Caco-2 (cell line): ENCODE measurements at regions of chr7 and their contacts with region 1.

Region 1: DNA sequence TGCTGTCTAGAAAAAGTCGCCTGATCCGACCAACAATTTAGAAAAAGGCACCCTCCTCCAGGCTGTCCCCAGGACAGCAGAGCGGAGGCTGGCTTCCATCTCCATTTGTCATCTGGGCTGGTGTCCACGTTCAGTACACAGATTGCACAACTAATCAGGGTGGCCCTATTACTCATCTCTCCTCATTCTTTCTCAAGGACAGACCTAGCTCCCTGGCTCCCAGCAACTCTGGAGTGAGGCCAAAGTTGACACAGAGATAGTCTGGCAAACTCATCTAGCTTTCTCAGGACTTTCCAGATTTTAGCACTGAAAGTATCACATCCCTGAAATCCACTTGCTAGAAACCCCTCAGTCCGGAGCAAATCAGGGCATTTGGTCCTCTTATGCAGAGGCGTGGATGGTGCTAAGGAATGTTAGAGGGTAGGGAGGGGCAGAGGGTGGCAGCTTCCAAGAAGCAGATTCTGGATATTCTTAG is 75.1 kb downstream of the DNAH11 start:
- DNase-seq: peak; percentile 75 to 83
- H3K4me3 ChIP-seq: no peak overlapping the region
- H3K4me3 Mint-ChIP-seq: peak overlapping the region; percentile 59
- H3K27ac Mint-ChIP-seq: peak overlapping the region; percentile 94
- H3K4me1 ChIP-seq: peaks cover 40% of the 10 kb centered on the region
- H3K4me1 Mint-ChIP-seq: peaks cover 29% of the 10 kb centered on the region
- H3K27me3 ChIP-seq: no peaks in the 10 kb centered on the region
- H3K27me3 Mint-ChIP-seq: no peaks in the 10 kb centered on the region
- CTCF ChIP-seq: no peak

Region 2: GRCh38 chr7:21221129-21221528 is 396.8 kb before region 1 on chr7:
- CTCF ChIA-PET with region 1: no interaction called
- POLR2A ChIA-PET with region 1: no interaction called
- intact Hi-C with region 1: no loop called
- DNase-seq: no peak
- H3K4me3 ChIP-seq: no peak overlapping the region
- H3K4me3 Mint-ChIP-seq: no peak overlapping the region
- H3K27ac Mint-ChIP-seq: no peak overlapping the region
- H3K4me1 ChIP-seq: peaks cover 3% of the 10 kb centered on the region
- H3K4me1 Mint-ChIP-seq: peaks cover 2% of the 10 kb centered on the region
- H3K27me3 ChIP-seq: no peaks in the 10 kb centered on the region
- H3K27me3 Mint-ChIP-seq: peaks cover 3% of the 10 kb centered on the region
- CTCF ChIP-seq: no peak

Region 3: DNA sequence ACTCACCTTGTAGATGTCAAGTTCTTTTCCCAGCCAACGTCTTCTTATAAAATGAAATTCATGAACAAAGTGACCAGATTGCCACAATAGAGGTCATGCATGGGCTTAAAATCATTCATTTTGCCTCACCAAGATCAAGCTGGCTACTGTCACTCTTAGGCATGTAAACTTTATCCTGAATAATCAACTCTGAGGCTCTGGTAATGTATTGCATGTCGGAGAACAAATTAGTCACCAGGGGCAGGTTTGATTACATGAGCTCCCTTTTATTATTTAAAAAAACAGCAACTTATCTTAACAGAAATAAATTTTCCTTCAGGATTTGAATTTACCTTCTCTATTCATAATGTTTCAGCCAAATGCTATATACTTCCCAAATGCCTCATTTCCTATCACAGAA is 303.0 kb before region 1 on chr7:
- CTCF ChIA-PET with region 1: no interaction called
- POLR2A ChIA-PET with region 1: no interaction called
- intact Hi-C with region 1: no loop called
- DNase-seq: no peak
- H3K4me3 ChIP-seq: no peak overlapping the region
- H3K4me3 Mint-ChIP-seq: no peak overlapping the region
- H3K27ac Mint-ChIP-seq: no peak overlapping the region
- H3K4me1 ChIP-seq: no peaks in the 10 kb centered on the region
- H3K4me1 Mint-ChIP-seq: no peaks in the 10 kb centered on the region
- H3K27me3 ChIP-seq: no peaks in the 10 kb centered on the region
- H3K27me3 Mint-ChIP-seq: no peaks in the 10 kb centered on the region
- CTCF ChIP-seq: no peak

Region 4: GRCh38 chr7:21365866-21366624 is 251.9 kb before region 1 on chr7:
- CTCF ChIA-PET with region 1: no interaction called
- POLR2A ChIA-PET with region 1: no interaction called
- intact Hi-C with region 1: loop called (anchors 1 kb)
- DNase-seq: peak; percentile 52 to 77
- H3K4me3 ChIP-seq: no peak overlapping the region
- H3K4me3 Mint-ChIP-seq: peak overlapping the region; percentile 14
- H3K27ac Mint-ChIP-seq: peak overlapping the region; percentile 65
- H3K4me1 ChIP-seq: peaks cover 48% of the 10 kb centered on the region
- H3K4me1 Mint-ChIP-seq: peaks cover 34% of the 10 kb centered on the region
- H3K27me3 ChIP-seq: no peaks in the 10 kb centered on the region
- H3K27me3 Mint-ChIP-seq: no peaks in the 10 kb centered on the region
- CTCF ChIP-seq: no peak

Region 5: DNA sequence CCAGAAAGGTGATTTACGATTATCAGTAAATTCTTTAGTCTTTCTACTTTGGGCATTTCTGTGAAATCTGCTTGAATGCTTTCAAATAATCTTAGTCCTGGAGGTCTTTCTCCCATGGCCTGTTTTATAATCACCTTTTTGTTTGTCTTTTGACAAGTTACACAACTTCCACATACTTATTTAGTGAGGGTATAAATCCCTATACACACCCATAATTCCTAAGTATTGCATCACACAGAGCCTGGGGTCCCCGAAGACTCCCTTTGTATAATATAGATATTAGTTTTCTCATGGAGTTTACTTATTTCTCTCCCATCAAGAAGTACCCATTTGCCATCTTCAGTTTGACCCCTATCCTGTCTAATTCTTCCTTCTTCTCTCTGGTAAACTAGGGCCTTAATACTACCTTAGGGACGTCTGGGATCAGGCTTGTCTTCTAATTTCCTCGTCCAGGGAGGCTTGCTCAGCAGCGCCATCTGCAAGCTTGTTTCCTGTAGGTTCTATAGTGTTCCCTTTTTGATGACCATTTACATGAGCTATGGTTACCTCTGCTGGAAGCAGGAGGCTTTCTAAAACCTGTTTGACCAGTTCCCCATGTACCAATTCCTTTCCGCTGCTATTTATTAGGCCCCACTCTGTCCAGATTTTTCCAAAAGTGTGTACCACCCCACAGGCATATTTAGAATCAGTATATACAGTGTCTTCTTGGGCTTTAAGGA is 67.0 kb before region 1 on chr7:
- CTCF ChIA-PET with region 1: no interaction called
- POLR2A ChIA-PET with region 1: no interaction called
- intact Hi-C with region 1: loop called (anchors 2 kb)
- DNase-seq: peak; percentile 69 to 73
- H3K4me3 ChIP-seq: no peak overlapping the region
- H3K4me3 Mint-ChIP-seq: peak overlapping the region; percentile 16
- H3K27ac Mint-ChIP-seq: peak overlapping the region; percentile 61
- H3K4me1 ChIP-seq: peaks cover 22% of the 10 kb centered on the region
- H3K4me1 Mint-ChIP-seq: peaks cover 13% of the 10 kb centered on the region
- H3K27me3 ChIP-seq: no peaks in the 10 kb centered on the region
- H3K27me3 Mint-ChIP-seq: no peaks in the 10 kb centered on the region
- CTCF ChIP-seq: peak; percentile 18 to 23

Region 6: DNA sequence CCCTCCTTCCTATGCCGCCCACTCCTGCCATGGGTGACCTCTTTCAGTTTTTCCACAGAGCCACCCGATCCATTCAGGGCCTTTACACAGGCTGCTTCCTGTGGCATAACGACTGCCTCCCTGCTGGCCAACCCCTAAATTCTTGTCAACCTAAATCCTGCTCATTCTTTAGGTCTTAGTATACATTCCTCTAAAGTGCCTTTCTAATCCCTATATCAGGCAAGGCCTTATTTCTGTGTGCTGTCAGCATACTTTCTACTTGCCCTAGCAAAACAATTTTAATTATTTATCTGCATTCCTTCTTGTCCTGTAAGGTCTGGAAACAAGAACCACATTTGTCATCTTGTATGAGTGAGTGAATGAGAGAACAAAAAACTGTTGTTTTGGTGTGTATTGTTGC is 57.3 kb after region 1 on chr7:
- CTCF ChIA-PET with region 1: no interaction called
- POLR2A ChIA-PET with region 1: no interaction called
- intact Hi-C with region 1: loop called (anchors 1 kb)
- DNase-seq: peak; percentile 39 to 55
- H3K4me3 ChIP-seq: no peak overlapping the region
- H3K4me3 Mint-ChIP-seq: no peak overlapping the region
- H3K27ac Mint-ChIP-seq: no peak overlapping the region
- H3K4me1 ChIP-seq: peaks cover 19% of the 10 kb centered on the region
- H3K4me1 Mint-ChIP-seq: no peaks in the 10 kb centered on the region
- H3K27me3 ChIP-seq: no peaks in the 10 kb centered on the region
- H3K27me3 Mint-ChIP-seq: no peaks in the 10 kb centered on the region
- CTCF ChIP-seq: no peak

Region 7: GRCh38 chr7:21690705-21691104 is 72.8 kb after region 1 on chr7:
- CTCF ChIA-PET with region 1: no interaction called
- POLR2A ChIA-PET with region 1: no interaction called
- intact Hi-C with region 1: no loop called
- DNase-seq: no peak
- H3K4me3 ChIP-seq: no peak overlapping the region
- H3K4me3 Mint-ChIP-seq: no peak overlapping the region
- H3K27ac Mint-ChIP-seq: no peak overlapping the region
- H3K4me1 ChIP-seq: no peaks in the 10 kb centered on the region
- H3K4me1 Mint-ChIP-seq: no peaks in the 10 kb centered on the region
- H3K27me3 ChIP-seq: no peaks in the 10 kb centered on the region
- H3K27me3 Mint-ChIP-seq: no peaks in the 10 kb centered on the region
- CTCF ChIP-seq: peak in 1 of 2 experiments; percentile 19

Region 8: GRCh38 chr7:21757537-21758282 is 139.8 kb after region 1 on chr7:
- CTCF ChIA-PET with region 1: no interaction called
- POLR2A ChIA-PET with region 1: no interaction called
- intact Hi-C with region 1: loop called (anchors 2 kb)
- DNase-seq: peak in 1 of 2 experiments; percentile 17
- H3K4me3 ChIP-seq: peak overlapping the region; percentile 19
- H3K4me3 Mint-ChIP-seq: peak overlapping the region; percentile 72
- H3K27ac Mint-ChIP-seq: peak overlapping the region; percentile 72
- H3K4me1 ChIP-seq: peaks cover 21% of the 10 kb centered on the region
- H3K4me1 Mint-ChIP-seq: peaks cover 34% of the 10 kb centered on the region
- H3K27me3 ChIP-seq: no peaks in the 10 kb centered on the region
- H3K27me3 Mint-ChIP-seq: no peaks in the 10 kb centered on the region
- CTCF ChIP-seq: no peak